Activated CD4-positive, alpha-beta T cell treated with anti-CD3 and anti-CD28 coated beads for 36 hours (primary cell): ENCODE measurements at regions of chrX and their contacts with region 1.

Region 1: GRCh38 chrX:136780763-136781162 is at the start of gene ARHGEF6:
- DNase-seq: peak; percentile 55
- ATAC-seq: peak; percentile 57
- H3K4me3 Mint-ChIP-seq: peak within 1 kb of the TSS; percentile 89
- H3K27ac Mint-ChIP-seq: peak within 1 kb of the TSS; percentile 99
- H3K4me1 Mint-ChIP-seq: peaks cover 60% of the 10 kb centered on the region
- H3K27me3 Mint-ChIP-seq: no peaks in the 10 kb centered on the region
- total RNA-seq, gene ARHGEF6: 44.5 to 53.6 TPM

Region 2: DNA sequence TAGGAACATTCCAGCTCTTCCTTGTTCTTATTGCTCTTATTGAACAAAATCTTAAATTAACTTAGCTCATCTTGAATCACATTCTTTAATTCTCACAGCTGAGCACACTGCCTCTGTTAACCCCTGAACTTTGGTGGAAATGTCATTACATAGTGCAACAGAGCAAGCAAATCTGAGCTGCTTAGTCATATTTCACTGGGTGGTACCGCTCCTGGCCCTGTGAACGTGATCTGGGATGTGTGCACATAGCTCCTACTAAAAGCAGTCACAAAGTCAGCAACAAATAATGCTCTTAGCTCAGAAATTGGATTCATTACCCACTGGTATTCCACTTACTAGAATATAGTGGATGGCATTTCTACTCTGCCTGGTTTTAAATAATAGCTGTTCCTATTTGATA is 28.0 kb before region 1 on chrX:
- CTCF ChIA-PET with region 1: interaction called, 6 read pairs
- POLR2A ChIA-PET with region 1: no interaction called
- intact Hi-C with region 1: loop called in 1 of 2 experiments (anchors 2 kb)
- DNase-seq: no peak
- ATAC-seq: no peak
- H3K4me3 Mint-ChIP-seq: no peak overlapping the region
- H3K27ac Mint-ChIP-seq: peak overlapping the region; percentile 47
- H3K4me1 Mint-ChIP-seq: peaks cover 82% of the 10 kb centered on the region
- H3K27me3 Mint-ChIP-seq: no peaks in the 10 kb centered on the region

Region 3: DNA sequence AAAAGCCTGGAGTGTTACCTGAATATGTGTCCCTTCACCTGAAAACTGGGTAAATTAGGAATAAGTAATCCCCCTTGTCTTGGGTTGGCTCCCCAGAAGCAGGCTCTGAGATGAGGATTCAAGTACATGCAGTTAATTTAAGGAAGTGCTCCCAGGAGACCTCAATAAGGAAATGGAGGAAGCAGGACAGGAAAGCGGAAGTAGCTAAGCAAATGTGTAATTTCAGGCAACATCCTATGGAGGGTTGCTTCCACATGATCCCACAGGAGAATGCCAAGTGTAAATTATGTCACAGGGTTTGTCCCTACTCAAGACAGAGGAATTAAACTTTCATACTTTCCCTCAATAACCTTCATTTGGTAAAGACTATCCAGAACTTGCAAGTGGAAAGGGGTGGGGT is 48.1 kb after region 1 on chrX:
- CTCF ChIA-PET with region 1: no interaction called
- POLR2A ChIA-PET with region 1: no interaction called
- intact Hi-C with region 1: no loop called
- DNase-seq: no peak
- ATAC-seq: no peak
- H3K4me3 Mint-ChIP-seq: no peak overlapping the region
- H3K27ac Mint-ChIP-seq: no peak overlapping the region
- H3K4me1 Mint-ChIP-seq: no peaks in the 10 kb centered on the region
- H3K27me3 Mint-ChIP-seq: no peaks in the 10 kb centered on the region

Region 4: DNA sequence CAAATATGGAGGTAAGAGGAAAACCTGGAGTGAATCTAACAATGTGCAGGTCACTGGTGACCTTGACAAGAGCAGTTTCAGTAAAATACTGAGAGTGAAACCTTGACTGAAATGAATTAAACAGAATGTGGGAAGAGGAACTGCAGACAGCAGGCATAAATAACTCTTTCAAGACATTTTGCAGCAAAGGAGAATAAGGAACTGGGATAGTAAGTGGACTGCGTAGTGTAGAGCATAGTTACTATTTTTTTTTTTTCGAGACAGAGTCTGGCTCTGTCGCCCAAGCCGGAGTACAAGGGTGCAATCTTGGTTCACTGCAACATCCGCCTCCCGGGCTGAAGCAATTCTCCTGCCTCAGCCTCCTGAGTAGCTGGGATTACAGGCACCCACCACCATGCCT is 75.8 kb after region 1 on chrX:
- CTCF ChIA-PET with region 1: interaction called, 3 read pairs
- POLR2A ChIA-PET with region 1: no interaction called
- intact Hi-C with region 1: loop called in 1 of 2 experiments (anchors 10 kb)
- DNase-seq: no peak
- ATAC-seq: no peak
- H3K4me3 Mint-ChIP-seq: no peak overlapping the region
- H3K27ac Mint-ChIP-seq: peak overlapping the region; percentile 6
- H3K4me1 Mint-ChIP-seq: peaks cover 32% of the 10 kb centered on the region
- H3K27me3 Mint-ChIP-seq: no peaks in the 10 kb centered on the region

Region 5: DNA sequence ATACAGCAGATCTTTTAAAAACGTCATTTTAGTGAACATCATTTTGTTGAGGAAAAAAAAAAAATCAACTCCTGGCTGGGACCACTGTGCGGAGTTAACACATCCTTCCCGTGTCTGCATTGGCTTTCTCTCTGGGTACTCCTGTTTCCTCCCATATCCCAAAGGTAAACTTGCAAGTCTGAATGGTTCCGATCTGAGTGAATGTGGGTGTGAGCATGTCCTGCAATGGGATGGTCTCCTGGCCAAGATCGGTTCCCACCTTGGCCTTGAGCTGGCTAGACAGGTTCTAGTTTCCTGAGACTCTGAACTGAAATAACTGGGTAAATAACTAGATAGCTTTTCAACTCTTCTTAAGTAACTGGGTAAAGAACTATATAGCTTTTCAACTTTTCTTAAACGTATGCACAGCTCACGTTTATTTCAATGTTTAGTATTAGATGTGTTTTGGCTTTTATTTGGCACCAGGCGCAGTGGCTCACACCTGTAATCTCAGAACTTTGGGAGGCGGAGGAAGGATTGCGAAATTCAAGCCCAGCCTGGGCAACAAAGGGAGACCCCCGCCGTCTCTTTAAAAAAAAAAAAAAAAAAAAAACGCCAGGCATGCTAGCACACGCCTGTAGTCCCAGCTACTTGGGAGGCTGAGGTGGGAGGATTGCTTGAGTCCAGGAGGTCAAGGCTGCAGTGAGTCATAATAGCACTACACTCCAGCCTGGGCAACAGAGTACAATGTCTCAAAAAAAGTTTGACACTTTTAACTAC is 85.8 kb after region 1 on chrX:
- CTCF ChIA-PET with region 1: no interaction called
- POLR2A ChIA-PET with region 1: no interaction called
- intact Hi-C with region 1: loop called in 1 of 2 experiments (anchors 2 kb)
- DNase-seq: no peak
- ATAC-seq: no peak
- H3K4me3 Mint-ChIP-seq: peak overlapping the region; percentile 31
- H3K27ac Mint-ChIP-seq: peak overlapping the region; percentile 23
- H3K4me1 Mint-ChIP-seq: peaks cover 46% of the 10 kb centered on the region
- H3K27me3 Mint-ChIP-seq: no peaks in the 10 kb centered on the region

Region 6: GRCh38 chrX:136880452-136881013 is 99.8 kb after region 1 on chrX and contains the start of gene RBMX:
- CTCF ChIA-PET with region 1: no interaction called
- POLR2A ChIA-PET with region 1: interaction called, 6 read pairs
- intact Hi-C with region 1: loop called in 1 of 2 experiments (anchors 1 kb)
- DNase-seq: peak; percentile 92
- ATAC-seq: peak; percentile 93
- H3K4me3 Mint-ChIP-seq: peak within 1 kb of the TSS; percentile 100
- H3K27ac Mint-ChIP-seq: peak within 1 kb of the TSS; percentile 100
- H3K4me1 Mint-ChIP-seq: peaks cover 19% of the 10 kb centered on the region
- H3K27me3 Mint-ChIP-seq: no peaks in the 10 kb centered on the region
- total RNA-seq, gene RBMX: 320 to 414 TPM

Region 7: GRCh38 chrX:137051978-137052642 is 271.3 kb after region 1 on chrX:
- CTCF ChIA-PET with region 1: no interaction called
- POLR2A ChIA-PET with region 1: no interaction called
- intact Hi-C with region 1: no loop called
- DNase-seq: peak; percentile 87
- ATAC-seq: peak; percentile 89
- H3K4me3 Mint-ChIP-seq: peak overlapping the region; percentile 74
- H3K27ac Mint-ChIP-seq: peak overlapping the region; percentile 76
- H3K4me1 Mint-ChIP-seq: peaks cover 12% of the 10 kb centered on the region
- H3K27me3 Mint-ChIP-seq: peaks cover 19% of the 10 kb centered on the region